H1 (cell line): ENCODE measurements at regions of chr17 and their contacts with region 1.

Region 1: GRCh38 chr17:63718988-63719387 is 19.1 kb upstream of the LIMD2 start:
- DNase-seq: no peak
- H3K4me3 ChIP-seq: no peak overlapping the region
- H3K27ac ChIP-seq: no peak overlapping the region
- H3K4me1 ChIP-seq: no peaks in the 10 kb centered on the region
- H3K27me3 ChIP-seq: no peaks in the 10 kb centered on the region
- CTCF ChIP-seq: no peak
- EP300 ChIP-seq: no peak
- POLR2A ChIP-seq: no peak
- RAD21 ChIP-seq: no peak

Region 2: GRCh38 chr17:63707151-63707550 is 11.8 kb before region 1 on chr17:
- CTCF ChIA-PET with region 1: interaction called, 19 read pairs
- POLR2A ChIA-PET with region 1: interaction called, 7 read pairs
- DNase-seq: no peak
- H3K4me3 ChIP-seq: no peak overlapping the region
- H3K27ac ChIP-seq: no peak overlapping the region
- H3K4me1 ChIP-seq: peaks cover 0 to 3% (median under 1%) of the 10 kb centered on the region in 4 experiments; a peak in 3 of 7 replicates
- H3K27me3 ChIP-seq: no peaks in the 10 kb centered on the region
- CTCF ChIP-seq: no peak
- EP300 ChIP-seq: no peak
- POLR2A ChIP-seq: no peak
- RAD21 ChIP-seq: no peak